Activated B cell treated with CpG ODN at 0.5 μM for 24 hours (primary cell): ENCODE measurements at regions of chr12 and their contacts with region 1.

Region 1: GRCh38 chr12:6752921-6753771 is at the start of gene MLF2:
- DNase-seq: peak; percentile 98
- ATAC-seq: peak; percentile 91
- H3K4me3 Mint-ChIP-seq: peak within 1 kb of the TSS; percentile 93
- H3K27ac Mint-ChIP-seq: peak within 1 kb of the TSS; percentile 99
- H3K4me1 Mint-ChIP-seq: peaks cover 16% of the 10 kb centered on the region
- H3K27me3 Mint-ChIP-seq: no peaks in the 10 kb centered on the region
- CTCF ChIP-seq: peak; percentile 76
- total RNA-seq, gene MLF2: 102 and 105 TPM in 2 replicates

Region 2: GRCh38 chr12:5768581-5769196 is 984.5 kb before region 1 on chr12:
- CTCF ChIA-PET with region 1: no interaction called
- POLR2A ChIA-PET with region 1: no interaction called
- intact Hi-C with region 1: no loop called
- DNase-seq: no peak
- ATAC-seq: no peak
- H3K4me3 Mint-ChIP-seq: no peak overlapping the region
- H3K27ac Mint-ChIP-seq: no peak overlapping the region
- H3K4me1 Mint-ChIP-seq: no peaks in the 10 kb centered on the region
- H3K27me3 Mint-ChIP-seq: peaks cover 4% of the 10 kb centered on the region
- CTCF ChIP-seq: no peak

Region 3: GRCh38 chr12:6470375-6471163 is 282.6 kb before region 1 on chr12 and contains the start of gene VAMP1:
- CTCF ChIA-PET with region 1: no interaction called
- POLR2A ChIA-PET with region 1: interaction called, 17 read pairs
- intact Hi-C with region 1: no loop called
- DNase-seq: peak; percentile 96
- ATAC-seq: peak; percentile 93
- H3K4me3 Mint-ChIP-seq: peak within 1 kb of the TSS; percentile 92
- H3K27ac Mint-ChIP-seq: peak within 1 kb of the TSS; percentile 94
- H3K4me1 Mint-ChIP-seq: peaks cover 48% of the 10 kb centered on the region
- H3K27me3 Mint-ChIP-seq: no peaks in the 10 kb centered on the region
- CTCF ChIP-seq: no peak
- total RNA-seq, gene VAMP1: 32.9 and 34.5 TPM in 2 replicates

Region 4: DNA sequence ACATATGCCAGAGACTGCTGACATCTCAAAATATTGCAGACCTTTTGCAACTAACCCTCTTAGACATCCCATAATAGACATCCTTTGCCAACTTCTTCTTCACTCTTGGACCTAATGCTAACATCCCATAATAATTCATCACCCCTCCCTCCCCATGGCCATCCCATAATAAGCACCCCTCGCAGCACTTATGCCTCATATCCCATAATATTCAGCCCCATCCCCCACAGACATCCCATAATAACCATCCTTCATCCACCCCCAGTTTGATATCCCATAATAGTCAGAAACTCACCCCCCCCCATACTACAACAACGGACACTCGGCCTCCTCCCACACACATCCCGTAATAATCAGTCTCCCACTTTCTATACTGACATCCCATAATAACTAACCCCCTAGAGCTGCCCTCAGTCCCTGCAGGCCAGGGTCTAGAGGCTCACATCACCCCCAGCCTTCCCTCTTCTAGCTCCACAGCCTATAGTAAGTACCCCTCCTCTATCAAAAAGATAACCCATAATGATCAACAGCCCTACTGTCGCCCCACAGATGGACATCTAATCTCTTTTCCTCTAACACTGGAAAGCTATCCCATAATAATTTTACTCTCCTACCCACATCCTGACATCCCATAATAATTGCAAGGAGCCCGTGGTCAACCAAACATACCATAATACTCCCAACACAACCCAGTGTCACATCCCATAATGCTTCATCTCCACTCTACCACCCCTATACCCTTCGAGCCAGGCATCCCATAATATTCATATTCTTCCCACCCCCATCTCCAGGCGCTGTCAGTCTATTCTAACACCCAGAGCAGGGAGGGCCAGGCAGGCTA is 145.2 kb before region 1 on chr12:
- CTCF ChIA-PET with region 1: interaction called, 3 read pairs
- POLR2A ChIA-PET with region 1: interaction called, 17 read pairs
- intact Hi-C with region 1: loop called (anchors 1 kb)
- DNase-seq: no peak
- ATAC-seq: peak; percentile 31
- H3K4me3 Mint-ChIP-seq: no peak overlapping the region
- H3K27ac Mint-ChIP-seq: no peak overlapping the region
- H3K4me1 Mint-ChIP-seq: peaks cover 64% of the 10 kb centered on the region
- H3K27me3 Mint-ChIP-seq: no peaks in the 10 kb centered on the region
- CTCF ChIP-seq: no peak

Region 5: GRCh38 chr12:6688999-6689882 is 63.9 kb before region 1 on chr12 and contains the start of gene ZNF384:
- CTCF ChIA-PET with region 1: interaction called, 13 read pairs
- POLR2A ChIA-PET with region 1: interaction called, 78 read pairs
- intact Hi-C with region 1: loop called (anchors 1 kb)
- DNase-seq: peak; percentile 84
- ATAC-seq: peak; percentile 77
- H3K4me3 Mint-ChIP-seq: peak within 1 kb of the TSS; percentile 94
- H3K27ac Mint-ChIP-seq: peak within 1 kb of the TSS; percentile 96
- H3K4me1 Mint-ChIP-seq: peaks cover 52% of the 10 kb centered on the region
- H3K27me3 Mint-ChIP-seq: no peaks in the 10 kb centered on the region
- CTCF ChIP-seq: no peak
- total RNA-seq, gene ZNF384: 81.7 and 98.6 TPM in 2 replicates

Region 6: DNA sequence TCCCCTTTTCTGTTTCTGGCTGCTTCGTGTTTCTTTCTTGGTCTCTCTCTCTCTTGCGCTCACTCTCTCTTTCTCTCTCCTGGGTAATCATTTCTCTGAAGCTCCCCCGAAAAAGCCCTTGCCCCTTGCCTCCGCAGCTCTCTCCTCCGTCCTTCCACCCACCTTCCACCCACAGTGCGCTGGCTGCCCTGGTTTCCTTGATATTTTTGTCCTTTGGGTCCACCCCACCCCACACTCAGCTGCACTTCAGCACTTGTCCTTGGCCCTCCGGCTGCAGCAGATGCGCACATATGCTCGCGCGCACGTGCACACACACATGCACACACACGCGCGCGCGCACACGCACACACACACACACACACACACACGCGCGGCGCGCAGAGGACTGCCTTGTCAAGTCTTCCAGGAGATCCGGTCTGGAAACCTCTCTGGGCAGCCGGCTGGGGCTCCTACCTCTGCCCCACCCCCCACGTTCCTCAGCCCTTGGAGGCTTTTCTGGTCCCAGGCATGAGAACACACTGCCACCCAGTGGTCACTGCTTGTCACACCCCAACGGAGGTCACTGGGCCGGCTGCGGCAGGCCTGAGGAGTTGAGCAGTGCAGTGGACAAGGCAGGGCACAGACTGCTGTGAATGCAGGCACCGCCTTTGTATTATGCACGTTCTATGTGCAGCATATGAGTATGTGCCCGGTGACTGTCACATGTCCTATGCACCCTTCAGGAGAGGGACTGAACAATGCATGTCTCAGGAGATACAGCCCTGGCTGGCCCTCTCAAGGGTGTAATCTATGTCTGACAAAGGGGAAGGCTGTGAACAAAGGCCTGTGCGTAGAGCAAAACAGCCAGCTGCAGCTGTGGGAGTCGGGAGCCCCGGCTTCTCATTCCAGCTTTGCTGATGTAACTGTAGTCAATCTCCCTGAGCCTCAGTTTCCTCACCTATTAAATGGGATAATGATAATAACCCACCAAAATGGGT is 25.7 kb after region 1 on chr12:
- CTCF ChIA-PET with region 1: interaction called, 44 read pairs
- POLR2A ChIA-PET with region 1: interaction called, 13 read pairs
- intact Hi-C with region 1: loop called (anchors 1 kb)
- DNase-seq: peak; percentile 77
- ATAC-seq: peak; percentile 98
- H3K4me3 Mint-ChIP-seq: peak overlapping the region; percentile 74
- H3K27ac Mint-ChIP-seq: peak overlapping the region; percentile 4
- H3K4me1 Mint-ChIP-seq: peaks cover 9% of the 10 kb centered on the region
- H3K27me3 Mint-ChIP-seq: peaks cover 42% of the 10 kb centered on the region
- CTCF ChIP-seq: peak; percentile 68

Region 7: DNA sequence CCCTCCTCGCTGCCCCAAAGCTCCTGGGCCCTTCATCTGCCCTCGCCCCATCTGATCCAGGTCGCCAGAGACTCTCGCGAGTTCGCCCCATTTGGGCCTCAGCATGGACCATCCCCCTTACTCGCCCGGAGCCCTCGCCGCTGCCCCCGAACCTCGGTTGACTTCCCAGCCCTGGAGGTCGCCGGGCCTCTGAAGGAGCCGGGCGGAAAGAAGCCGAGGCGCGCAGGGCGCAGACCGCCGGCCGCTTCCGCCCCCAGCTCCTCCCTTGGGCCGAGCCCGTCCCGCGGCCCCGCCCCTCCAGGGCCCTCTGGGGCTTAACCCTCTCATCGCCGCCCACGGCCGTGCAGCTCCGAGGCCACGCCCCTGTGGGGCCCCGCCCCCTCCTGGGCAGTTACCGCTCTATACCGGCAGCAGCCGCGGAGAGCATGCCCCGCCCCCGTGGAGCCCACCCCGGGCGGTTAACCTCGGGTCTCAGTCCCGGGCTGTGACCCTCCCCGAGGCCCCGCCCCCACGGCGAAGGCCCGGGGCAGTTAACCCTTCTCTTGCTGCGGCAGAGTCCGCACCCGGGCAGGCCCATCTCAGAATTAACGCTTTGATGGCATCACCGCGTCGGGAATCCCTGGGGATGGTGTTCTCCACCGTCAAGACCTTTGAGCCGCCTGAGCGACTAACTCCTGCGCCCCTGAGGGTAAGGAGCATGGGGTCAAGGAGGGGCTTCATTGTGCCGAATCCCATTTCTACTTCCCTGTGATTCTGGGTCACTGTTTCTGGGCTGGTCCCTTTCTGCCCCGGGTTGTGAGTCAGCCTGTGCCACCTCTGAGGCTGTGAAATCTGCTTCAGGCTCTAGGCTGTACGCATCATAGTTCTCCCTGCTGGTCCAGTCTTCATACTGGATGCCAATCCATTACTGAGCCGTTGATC is 120.2 kb after region 1 on chr12 and contains the start of gene SPSB2:
- CTCF ChIA-PET with region 1: interaction called, 10 read pairs
- POLR2A ChIA-PET with region 1: interaction called, 23 read pairs
- intact Hi-C with region 1: loop called (anchors 1 kb)
- DNase-seq: peak; percentile 100
- ATAC-seq: peak; percentile 88
- H3K4me3 Mint-ChIP-seq: peak within 1 kb of the TSS; percentile 88
- H3K27ac Mint-ChIP-seq: peak within 1 kb of the TSS; percentile 85
- H3K4me1 Mint-ChIP-seq: peaks cover 37% of the 10 kb centered on the region
- H3K27me3 Mint-ChIP-seq: no peaks in the 10 kb centered on the region
- CTCF ChIP-seq: no peak
- total RNA-seq, gene SPSB2: 14.4 and 16.2 TPM in 2 replicates

Region 8: GRCh38 chr12:6896846-6897435 is 143.8 kb after region 1 on chr12:
- CTCF ChIA-PET with region 1: no interaction called
- POLR2A ChIA-PET with region 1: no interaction called
- intact Hi-C with region 1: no loop called
- DNase-seq: no peak
- ATAC-seq: no peak
- H3K4me3 Mint-ChIP-seq: no peak overlapping the region
- H3K27ac Mint-ChIP-seq: no peak overlapping the region
- H3K4me1 Mint-ChIP-seq: peaks cover 9% of the 10 kb centered on the region
- H3K27me3 Mint-ChIP-seq: no peaks in the 10 kb centered on the region
- CTCF ChIP-seq: no peak

Region 9: GRCh38 chr12:7108796-7109571 is 355.8 kb after region 1 on chr12 and contains the start of gene C1RL:
- CTCF ChIA-PET with region 1: no interaction called
- POLR2A ChIA-PET with region 1: interaction called, 4 read pairs
- intact Hi-C with region 1: loop called (anchors 2 kb)
- DNase-seq: peak; percentile 83
- ATAC-seq: peak; percentile 53
- H3K4me3 Mint-ChIP-seq: peak within 1 kb of the TSS; percentile 92
- H3K27ac Mint-ChIP-seq: peak within 1 kb of the TSS; percentile 94
- H3K4me1 Mint-ChIP-seq: peaks cover 29% of the 10 kb centered on the region
- H3K27me3 Mint-ChIP-seq: no peaks in the 10 kb centered on the region
- CTCF ChIP-seq: peak; percentile 58
- total RNA-seq, gene C1RL: 13.5 and 19.2 TPM in 2 replicates